ENCODE measurements at regions of chr3 and their contacts with region 1.

Region 1: GRCh38 chr3:138338811-138339210 is 9.2 kb upstream of the NME9 start:
- DNase-seq: no peak
- ATAC-seq: peak in 3 of 8 donors; percentile 20 to 32 (median 22)
- H3K4me3 ChIP-seq: no peak overlapping the region
- H3K27ac ChIP-seq: peak overlapping the region in 1 of 10 donors; percentile 15
- H3K4me1 ChIP-seq: peaks cover 0 to 14% (median 0%) of the 10 kb centered on the region in 9 donors
- H3K27me3 ChIP-seq: no peaks in the 10 kb centered on the region
- CTCF ChIP-seq: no peak

Region 2: DNA sequence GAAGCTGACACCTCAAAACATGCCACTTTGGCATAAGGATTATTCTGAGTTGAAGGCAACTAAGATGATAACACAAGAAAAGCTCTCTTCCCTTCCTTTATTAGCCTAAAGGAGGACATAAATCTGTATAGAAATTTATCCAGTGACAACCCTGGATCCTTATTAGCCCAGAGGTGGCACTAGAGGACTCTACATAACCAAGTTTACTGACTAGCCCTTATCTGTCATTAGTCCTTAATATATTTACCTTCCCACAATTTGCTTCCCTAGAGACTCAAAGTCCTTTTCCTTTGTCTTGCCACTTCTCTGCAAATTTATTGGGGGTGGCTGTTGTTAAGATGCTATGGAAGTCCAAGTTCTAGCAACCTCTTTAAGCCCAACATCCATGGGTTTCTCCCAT is 228.6 kb after region 1 on chr3:
- intact Hi-C with region 1: loop called in 1 of 10 experiments (anchors 5 kb)
- DNase-seq: no peak
- ATAC-seq: no peak
- H3K4me3 ChIP-seq: no peak overlapping the region
- H3K27ac ChIP-seq: no peak overlapping the region
- H3K4me1 ChIP-seq: no peaks in the 10 kb centered on the region
- H3K27me3 ChIP-seq: no peaks in the 10 kb centered on the region
- CTCF ChIP-seq: no peak